ENCODE measurements at regions of chr7 and their contacts with region 1.

Region 1: DNA sequence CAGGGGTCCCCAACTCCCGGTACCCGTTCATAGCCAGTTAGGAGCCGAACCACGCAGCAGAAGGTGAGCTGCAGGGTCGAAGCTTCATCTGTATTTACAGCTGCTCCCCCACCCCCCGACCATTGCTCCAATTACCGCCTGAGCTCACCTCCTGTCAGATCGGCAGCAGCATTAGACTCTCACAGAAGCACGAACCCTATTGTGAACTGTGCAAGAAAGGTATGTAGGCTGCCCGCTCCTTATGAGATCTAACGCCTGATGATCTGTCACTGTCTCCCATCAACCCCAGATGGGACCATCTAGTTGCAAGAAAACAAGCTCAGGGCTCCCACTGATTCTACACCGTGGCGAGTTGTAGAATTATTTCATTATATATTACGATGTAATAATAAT is 14.6 kb upstream of the AZGP1 start:
- DNase-seq: no peak
- ATAC-seq: peak in 1 of 2 donors; percentile 9
- H3K4me3 ChIP-seq: peak overlapping the region in 3 of 4 donors; percentile 6 to 37 (median 35)
- H3K27ac ChIP-seq: no peak overlapping the region
- H3K4me1 ChIP-seq: peaks cover 0 to 5% of the 10 kb centered on the region in 2 donors
- H3K27me3 ChIP-seq: no peaks in the 10 kb centered on the region
- CTCF ChIP-seq: no peak
- POLR2A ChIP-seq: no peak

Region 2: DNA sequence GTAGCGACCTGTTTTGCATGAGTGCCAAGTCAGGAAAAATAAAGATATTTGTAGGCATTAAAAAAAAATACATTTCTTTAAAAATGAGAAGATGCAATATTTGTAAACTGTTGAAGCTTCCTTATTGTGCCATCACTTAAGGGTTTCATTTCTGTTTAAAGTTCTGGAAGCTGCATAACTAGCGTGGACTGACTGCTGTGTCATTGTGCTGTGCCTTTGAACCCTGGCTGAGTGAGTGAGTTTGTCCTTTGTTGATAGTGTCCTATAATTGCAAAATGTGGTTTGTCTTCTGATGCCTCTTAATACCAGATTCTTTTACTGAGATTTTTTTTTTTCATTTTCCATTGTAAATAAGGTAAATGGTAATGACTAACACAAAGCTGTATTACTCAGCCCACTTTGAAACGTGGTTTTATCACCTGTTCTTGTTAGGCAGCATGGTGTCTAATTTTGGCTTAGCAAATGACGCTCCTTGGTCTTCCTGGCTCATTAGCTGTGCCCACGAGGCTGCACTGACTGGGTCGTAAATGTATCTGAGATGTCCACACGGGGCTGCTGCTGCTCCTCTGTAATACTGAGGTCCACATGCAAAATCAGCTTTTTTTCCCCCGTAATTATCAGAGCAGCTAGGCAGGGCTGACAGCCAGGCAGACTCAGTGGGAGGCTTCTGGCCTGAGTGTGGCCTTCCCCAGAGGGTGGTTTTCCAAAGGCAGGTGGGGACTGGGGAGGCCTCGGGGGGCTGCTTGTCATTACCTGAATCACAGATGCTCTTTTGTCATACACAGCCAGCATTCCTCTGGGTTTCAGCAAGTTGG is 359.0 kb before region 1 on chr7:
- in situ Hi-C with region 1: no loop called
- intact Hi-C with region 1: loop called (anchors 1 kb)
- DNase-seq: peak; percentile 48 to 78
- ATAC-seq: peak; percentile 96 to 98
- H3K4me3 ChIP-seq: no peak overlapping the region
- H3K27ac ChIP-seq: peak overlapping the region; percentile 67 to 82 (median 71)
- H3K4me1 ChIP-seq: peaks cover 10 to 17% of the 10 kb centered on the region in 2 donors
- H3K27me3 ChIP-seq: no peaks in the 10 kb centered on the region
- CTCF ChIP-seq: peak; percentile 40 to 61 (median 52)
- POLR2A ChIP-seq: no peak

Region 3: GRCh38 chr7:99910976-99911375 is 79.5 kb before region 1 on chr7:
- in situ Hi-C with region 1: loop called in 2 of 4 experiments (anchors 10 kb)
- intact Hi-C with region 1: loop called (anchors 2 kb)
- DNase-seq: no peak
- ATAC-seq: no peak
- H3K4me3 ChIP-seq: no peak overlapping the region
- H3K27ac ChIP-seq: no peak overlapping the region
- H3K4me1 ChIP-seq: peaks cover 0 to 4% of the 10 kb centered on the region in 2 donors
- H3K27me3 ChIP-seq: no peaks in the 10 kb centered on the region
- CTCF ChIP-seq: no peak
- POLR2A ChIP-seq: no peak

Region 4: DNA sequence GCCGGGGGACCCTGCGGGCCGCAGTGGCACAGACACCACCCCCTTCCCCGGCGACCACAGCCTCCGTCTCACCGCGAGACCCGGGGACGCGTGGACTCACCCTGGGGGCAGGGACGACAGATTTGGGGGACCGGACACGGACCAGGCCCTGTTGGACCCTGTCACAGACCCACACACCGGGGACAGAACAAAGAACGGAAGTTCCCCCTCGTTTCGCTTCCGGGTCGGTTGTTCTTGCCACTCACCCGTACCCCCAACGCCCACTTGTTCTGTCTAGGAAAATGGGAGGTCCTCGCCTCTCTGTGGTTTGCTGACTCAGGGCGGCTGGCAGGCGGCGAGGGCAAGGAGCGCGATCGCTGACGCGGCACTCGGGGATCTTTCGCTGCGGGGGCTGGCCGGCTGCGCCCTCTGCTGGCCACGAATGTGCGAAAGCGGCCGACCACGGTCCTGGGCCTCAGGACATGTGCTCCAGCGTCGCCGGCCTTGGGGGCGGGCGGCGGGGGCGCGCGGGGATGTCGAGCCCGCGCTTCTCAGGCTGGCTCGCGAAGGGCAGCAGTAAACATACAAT is 91.2 kb after region 1 on chr7 and contains the start of gene ZNF3:
- in situ Hi-C with region 1: no loop called
- intact Hi-C with region 1: loop called (anchors 5 kb)
- DNase-seq: peak; percentile 99
- ATAC-seq: peak; percentile 95 to 96
- H3K4me3 ChIP-seq: peak within 1 kb of the TSS; percentile 81 to 99 (median 87)
- H3K27ac ChIP-seq: peak within 1 kb of the TSS; percentile 86 to 96 (median 90)
- H3K4me1 ChIP-seq: peaks cover 22 to 24% of the 10 kb centered on the region in 2 donors
- H3K27me3 ChIP-seq: no peaks in the 10 kb centered on the region
- CTCF ChIP-seq: peak; percentile 93 to 98 (median 94)
- POLR2A ChIP-seq: peak; percentile 62 to 85
- total RNA-seq, gene ZNF3: 11.2 to 19.2 (median 16.1) TPM

Region 5: GRCh38 chr7:100126931-100127865 is 136.7 kb after region 1 on chr7 and contains the start of gene MBLAC1:
- in situ Hi-C with region 1: loop called in 2 of 4 experiments (anchors 10 kb)
- intact Hi-C with region 1: loop called (anchors 5 kb)
- DNase-seq: peak; percentile 82 to 84
- ATAC-seq: peak; percentile 93 to 94
- H3K4me3 ChIP-seq: peak within 1 kb of the TSS; percentile 75 to 94 (median 84)
- H3K27ac ChIP-seq: peak within 1 kb of the TSS; percentile 90 to 96 (median 92)
- H3K4me1 ChIP-seq: peaks cover 11 to 22% of the 10 kb centered on the region in 2 donors
- H3K27me3 ChIP-seq: no peaks in the 10 kb centered on the region
- CTCF ChIP-seq: no peak
- POLR2A ChIP-seq: no peak
- total RNA-seq, gene MBLAC1: 1.4 to 7.4 (median 3.1) TPM

Region 6: GRCh38 chr7:100456558-100456957 is 466.1 kb after region 1 on chr7:
- in situ Hi-C with region 1: no loop called
- intact Hi-C with region 1: no loop called
- DNase-seq: no peak
- ATAC-seq: no peak
- H3K4me3 ChIP-seq: no peak overlapping the region
- H3K27ac ChIP-seq: no peak overlapping the region
- H3K4me1 ChIP-seq: no peaks in the 10 kb centered on the region
- H3K27me3 ChIP-seq: no peaks in the 10 kb centered on the region
- CTCF ChIP-seq: no peak
- POLR2A ChIP-seq: no peak

Measured in gastrocnemius medialis (tissue), 4 donors.